SK-N-SH (cell line): ENCODE measurements at regions of chr4 and their contacts with region 1.

Region 1: DNA sequence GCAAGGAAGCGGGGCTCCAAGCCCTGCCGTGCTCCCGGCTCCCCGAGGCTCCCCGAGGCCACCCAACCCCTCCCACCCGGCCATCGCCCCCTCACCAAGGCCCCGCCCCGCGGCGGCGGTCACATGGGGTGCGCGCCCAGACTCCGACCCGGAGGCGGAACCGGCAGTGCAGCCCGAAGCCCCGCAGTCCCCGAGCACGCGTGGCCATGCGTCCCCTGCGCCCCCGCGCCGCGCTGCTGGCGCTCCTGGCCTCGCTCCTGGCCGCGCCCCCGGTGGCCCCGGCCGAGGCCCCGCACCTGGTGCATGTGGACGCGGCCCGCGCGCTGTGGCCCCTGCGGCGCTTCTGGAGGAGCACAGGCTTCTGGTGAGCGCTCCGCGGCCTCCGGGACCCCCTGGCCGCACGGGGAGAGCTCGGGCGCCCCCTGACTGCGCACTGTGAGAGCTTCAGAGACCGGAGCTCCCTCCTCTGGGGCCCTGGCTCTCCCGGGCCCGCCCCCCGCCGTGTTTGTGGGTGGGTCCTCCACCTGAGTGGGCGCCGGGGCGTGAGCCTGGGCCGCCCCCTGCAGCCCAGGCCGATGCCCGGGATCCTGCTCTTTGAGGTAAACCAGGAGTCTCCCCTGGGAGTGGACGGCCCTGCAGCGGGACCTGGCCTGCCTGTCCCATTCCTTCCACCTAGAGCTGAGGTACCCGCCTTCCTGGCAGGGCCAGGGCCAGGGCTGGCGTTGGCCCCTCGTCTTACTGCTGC is at the start of gene IDUA:
- DNase-seq: peak; percentile 97
- H3K4me3 ChIP-seq: peak within 1 kb of the TSS; percentile 76 to 85
- H3K27ac ChIP-seq: peak within 1 kb of the TSS; percentile 55 to 82
- H3K4me1 ChIP-seq: peaks cover 10 to 17% of the 10 kb centered on the region in 2 experiments; a peak in 1 of 4 replicates
- H3K27me3 ChIP-seq: no peaks in the 10 kb centered on the region
- CTCF ChIP-seq: peak; percentile 58
- EP300 ChIP-seq: no peak
- RAD21 ChIP-seq: peak; percentile 66
- polyA plus RNA-seq, gene IDUA: 24.4 and 32.1 TPM in 2 replicates

Region 2: DNA sequence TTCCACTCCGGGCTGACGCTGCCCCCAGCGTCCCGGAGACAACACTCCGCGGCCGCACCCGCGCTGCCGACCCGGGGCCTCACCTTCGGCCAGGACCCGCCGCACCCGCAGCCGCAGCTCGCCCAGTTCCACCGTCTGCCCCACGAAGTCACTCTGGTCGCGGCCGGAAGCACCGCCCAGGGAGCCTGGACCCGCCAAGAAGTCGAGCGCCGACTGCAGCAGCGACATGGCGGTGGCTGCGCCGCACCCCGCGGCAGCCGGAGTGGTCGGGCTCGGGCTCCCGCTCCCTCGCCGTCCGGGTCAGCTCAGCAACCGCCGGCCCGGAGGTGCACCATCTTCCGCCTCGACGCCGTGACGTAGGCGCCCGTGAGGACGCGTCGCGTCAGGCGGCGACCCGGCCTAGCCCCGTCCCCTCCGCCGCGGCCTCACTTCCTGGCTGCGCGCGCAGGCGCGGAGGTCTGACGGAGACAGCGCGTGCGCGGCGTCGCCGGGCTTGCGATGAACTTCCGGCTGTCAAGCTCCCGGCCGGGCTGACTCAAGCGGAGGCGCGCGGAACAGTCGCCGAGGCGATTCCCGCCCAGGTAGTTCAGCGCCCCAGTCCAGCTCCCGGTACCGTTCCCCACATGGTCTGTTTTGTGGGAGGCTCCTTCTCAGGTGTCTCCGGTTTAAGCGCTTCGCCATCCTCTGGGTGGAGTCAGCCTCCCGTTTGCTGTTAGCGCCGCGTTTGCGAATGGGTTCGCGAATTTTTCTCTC is 54.9 kb before region 1 on chr4 and contains the starts of genes GAK and TMEM175:
- CTCF ChIA-PET with region 1: interaction called, 22 read pairs
- POLR2A ChIA-PET with region 1: interaction called, 3 read pairs
- DNase-seq: peak; percentile 99
- H3K4me3 ChIP-seq: peak within 1 kb of the TSS; percentile 98 to 100
- H3K27ac ChIP-seq: peak within 1 kb of the TSS; percentile 69 to 78; a peak in 3 of 4 replicates
- H3K4me1 ChIP-seq: peaks cover 5 to 18% of the 10 kb centered on the region in 2 experiments; a peak in 3 of 4 replicates
- H3K27me3 ChIP-seq: no peaks in the 10 kb centered on the region
- CTCF ChIP-seq: no peak
- EP300 ChIP-seq: no peak
- RAD21 ChIP-seq: no peak
- polyA plus RNA-seq, gene GAK: 35.9 and 36.1 TPM in 2 replicates
- polyA plus RNA-seq, gene TMEM175: 43.1 and 54.2 TPM in 2 replicates

Region 3: GRCh38 chr4:997375-998071 is 10.5 kb after region 1 on chr4:
- CTCF ChIA-PET with region 1: interaction called, 11 read pairs
- POLR2A ChIA-PET with region 1: interaction called, 4 read pairs
- DNase-seq: peak; percentile 85
- H3K4me3 ChIP-seq: peak overlapping the region; percentile 29 to 33; a peak in 3 of 4 replicates
- H3K27ac ChIP-seq: no peak overlapping the region
- H3K4me1 ChIP-seq: no peaks in the 10 kb centered on the region; a peak in 1 of 4 replicates
- H3K27me3 ChIP-seq: peaks cover 15% of the 10 kb centered on the region
- CTCF ChIP-seq: no peak
- EP300 ChIP-seq: no peak
- RAD21 ChIP-seq: no peak

Region 4: DNA sequence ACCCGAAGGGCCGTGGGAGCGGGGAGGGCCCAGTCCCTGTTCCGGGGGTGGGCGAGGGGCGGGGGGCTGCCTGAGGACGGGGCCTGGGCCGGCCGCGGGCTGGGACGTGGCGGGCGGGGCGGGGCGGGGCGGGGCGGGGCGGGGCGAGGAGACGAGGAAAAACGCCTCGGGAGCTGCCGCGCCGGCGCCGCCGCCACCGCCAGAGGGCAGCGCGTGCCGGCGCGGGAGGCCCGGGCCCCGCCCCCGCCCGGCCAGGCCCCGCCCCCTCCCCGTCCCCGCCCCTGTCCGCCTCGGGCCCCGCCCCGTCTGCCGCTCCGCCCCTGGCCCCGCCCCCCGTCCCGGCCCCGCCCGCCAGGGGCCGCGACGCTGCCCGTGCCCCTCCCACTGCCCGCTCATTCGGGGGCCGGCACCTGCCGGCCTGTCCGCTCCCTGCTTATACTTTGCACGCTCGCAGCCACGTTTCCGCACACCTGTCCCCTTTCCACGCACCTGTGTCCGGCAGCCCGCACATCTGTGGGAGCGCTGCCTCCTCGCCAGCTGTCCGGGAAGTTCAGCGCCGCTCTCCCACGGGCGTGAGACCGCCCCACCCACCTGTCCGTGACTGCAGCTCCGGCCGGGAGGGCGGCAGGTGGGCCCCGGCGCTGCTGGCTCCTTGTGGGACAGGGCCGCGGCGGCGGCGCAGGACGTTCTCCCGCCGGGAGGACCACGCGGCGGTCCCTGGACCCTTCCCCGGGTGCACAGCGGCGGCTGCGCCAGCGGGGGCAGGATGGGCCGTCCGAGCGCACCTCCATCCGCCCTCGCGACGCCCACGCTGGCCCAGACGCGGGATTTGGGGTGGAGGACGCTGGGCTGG is 22.7 kb after region 1 on chr4:
- CTCF ChIA-PET with region 1: interaction called, 14 read pairs
- POLR2A ChIA-PET with region 1: no interaction called
- DNase-seq: peak; percentile 97
- H3K4me3 ChIP-seq: peak overlapping the region; percentile 52 to 63
- H3K27ac ChIP-seq: no peak overlapping the region
- H3K4me1 ChIP-seq: peaks cover 0 to 15% of the 10 kb centered on the region in 2 experiments; a peak in 1 of 4 replicates
- H3K27me3 ChIP-seq: peaks cover 43% of the 10 kb centered on the region
- CTCF ChIP-seq: no peak
- EP300 ChIP-seq: no peak
- RAD21 ChIP-seq: no peak